ENCODE measurements at regions of chr3 and their contacts with region 1.

Region 1: GRCh38 chr3:88203642-88204055 is 53.9 kb downstream of the C3orf38 start:
- DNase-seq: peak; percentile 78 to 80
- H3K4me3 ChIP-seq: no peak overlapping the region
- H3K27ac ChIP-seq: no peak overlapping the region
- H3K4me1 ChIP-seq: no peaks in the 10 kb centered on the region
- H3K27me3 ChIP-seq: no peaks in the 10 kb centered on the region
- CTCF ChIP-seq: peak; percentile 74 to 89 (median 81)
- POLR2A ChIP-seq: no peak

Region 2: GRCh38 chr3:90184861-90185260 is 1981.2 kb after region 1 on chr3:
- intact Hi-C with region 1: loop called (anchors 10 kb)
- DNase-seq: no peak
- H3K4me3 ChIP-seq: no peak overlapping the region
- H3K27ac ChIP-seq: no peak overlapping the region
- H3K4me1 ChIP-seq: no peaks in the 10 kb centered on the region
- H3K27me3 ChIP-seq: no peaks in the 10 kb centered on the region
- CTCF ChIP-seq: no peak
- POLR2A ChIP-seq: no peak

Measured in thyroid gland (tissue), 4 donors.